Activated naive CD4-positive, alpha-beta T cell treated with anti-CD3 and anti-CD28 coated beads for 36 hours (primary cell): ENCODE measurements at regions of chrX and their contacts with region 1.

Region 1: GRCh38 chrX:1462596-1463251 is 10.0 kb upstream of the ASMTL start:
- DNase-seq: peak; percentile 91
- H3K4me3 Mint-ChIP-seq: peak overlapping the region; percentile 28
- H3K27ac Mint-ChIP-seq: peak overlapping the region; percentile 89
- H3K4me1 Mint-ChIP-seq: peaks cover 53% of the 10 kb centered on the region
- H3K27me3 Mint-ChIP-seq: no peaks in the 10 kb centered on the region

Region 2: GRCh38 chrX:1368385-1368698 is 94.4 kb before region 1 on chrX:
- CTCF ChIA-PET with region 1: no interaction called
- intact Hi-C with region 1: no loop called
- DNase-seq: no peak
- H3K4me3 Mint-ChIP-seq: no peak overlapping the region
- H3K27ac Mint-ChIP-seq: no peak overlapping the region
- H3K4me1 Mint-ChIP-seq: no peaks in the 10 kb centered on the region
- H3K27me3 Mint-ChIP-seq: no peaks in the 10 kb centered on the region

Region 3: DNA sequence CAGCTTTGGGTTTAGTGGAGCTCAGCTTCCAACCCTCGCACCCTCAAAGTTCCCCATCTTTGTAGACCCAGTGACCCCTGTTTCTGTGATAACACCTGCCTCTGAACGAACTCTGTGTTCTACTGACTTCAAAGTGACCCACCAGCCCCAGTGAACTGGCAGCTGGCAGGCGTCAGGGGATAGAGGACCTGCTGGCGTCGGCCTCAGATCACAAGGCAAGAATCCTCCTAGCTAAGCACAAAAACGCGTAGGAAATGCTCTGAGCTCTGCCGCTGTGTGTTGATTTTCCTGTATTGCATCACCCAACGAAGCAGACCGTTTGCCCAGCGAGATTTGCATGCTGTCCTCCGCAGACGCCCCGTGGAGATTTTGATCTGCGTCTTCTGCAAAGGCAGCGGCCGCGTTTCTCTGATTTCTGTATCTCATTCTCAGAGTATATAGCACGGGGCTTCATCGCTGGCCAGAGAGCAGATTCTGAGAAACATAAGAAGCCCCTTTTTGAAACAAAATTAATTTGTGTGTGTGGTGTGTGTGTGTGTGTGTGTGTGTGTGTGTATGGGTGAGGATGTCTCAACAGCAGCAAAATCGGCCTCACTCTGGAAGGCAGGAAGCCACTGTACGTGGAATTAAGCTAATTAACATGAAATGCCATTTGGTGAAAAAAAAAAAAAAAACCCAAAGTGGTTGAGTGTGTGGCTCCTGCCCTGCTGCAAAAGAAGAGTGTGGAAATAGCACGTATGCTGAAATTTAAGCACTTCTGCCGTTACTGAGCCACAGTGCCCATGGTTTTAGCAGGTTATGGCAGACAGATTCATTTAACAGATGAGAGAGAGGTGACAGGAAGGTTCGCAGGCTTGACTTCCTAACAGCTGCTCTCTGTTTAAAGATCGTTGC is 19.2 kb after region 1 on chrX:
- CTCF ChIA-PET with region 1: no interaction called
- intact Hi-C with region 1: loop called (anchors 1 kb)
- DNase-seq: peak; percentile 84
- H3K4me3 Mint-ChIP-seq: peak overlapping the region; percentile 88
- H3K27ac Mint-ChIP-seq: peak overlapping the region; percentile 100
- H3K4me1 Mint-ChIP-seq: peaks cover 66% of the 10 kb centered on the region
- H3K27me3 Mint-ChIP-seq: no peaks in the 10 kb centered on the region

Region 4: DNA sequence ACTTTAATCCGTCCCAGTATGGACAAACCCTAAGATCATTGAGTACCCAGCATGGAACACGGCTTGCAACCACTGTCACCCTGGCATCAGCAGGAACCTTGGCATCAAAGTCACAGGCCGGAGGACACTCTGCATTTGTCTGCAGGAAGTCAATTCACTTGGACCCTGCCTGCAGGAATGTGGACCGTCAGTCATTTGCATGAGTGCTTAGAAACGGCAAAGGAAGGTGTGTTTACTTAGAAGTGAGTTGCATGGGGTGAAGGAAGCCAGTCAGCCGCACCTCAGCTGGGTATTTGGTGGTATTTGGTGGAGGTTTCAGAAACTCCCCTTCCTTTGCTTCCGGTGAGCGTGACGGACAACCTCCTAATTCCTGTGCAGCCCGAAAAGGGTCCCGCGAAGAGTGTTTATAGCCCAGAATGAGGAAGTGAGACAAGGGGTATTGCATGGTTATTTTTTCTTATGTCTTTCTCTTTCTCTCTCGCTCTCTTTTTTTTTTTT is 58.8 kb after region 1 on chrX:
- CTCF ChIA-PET with region 1: no interaction called
- intact Hi-C with region 1: loop called (anchors 1 kb)
- DNase-seq: peak; percentile 85
- H3K4me3 Mint-ChIP-seq: peak overlapping the region; percentile 74
- H3K27ac Mint-ChIP-seq: peak overlapping the region; percentile 75
- H3K4me1 Mint-ChIP-seq: peaks cover 51% of the 10 kb centered on the region
- H3K27me3 Mint-ChIP-seq: no peaks in the 10 kb centered on the region

Region 5: GRCh38 chrX:1580735-1581531 is 118.2 kb after region 1 on chrX:
- CTCF ChIA-PET with region 1: no interaction called
- intact Hi-C with region 1: loop called (anchors 2 kb)
- DNase-seq: peak; percentile 92
- H3K4me3 Mint-ChIP-seq: no peak overlapping the region
- H3K27ac Mint-ChIP-seq: no peak overlapping the region
- H3K4me1 Mint-ChIP-seq: peaks cover 18% of the 10 kb centered on the region
- H3K27me3 Mint-ChIP-seq: no peaks in the 10 kb centered on the region

Region 6: DNA sequence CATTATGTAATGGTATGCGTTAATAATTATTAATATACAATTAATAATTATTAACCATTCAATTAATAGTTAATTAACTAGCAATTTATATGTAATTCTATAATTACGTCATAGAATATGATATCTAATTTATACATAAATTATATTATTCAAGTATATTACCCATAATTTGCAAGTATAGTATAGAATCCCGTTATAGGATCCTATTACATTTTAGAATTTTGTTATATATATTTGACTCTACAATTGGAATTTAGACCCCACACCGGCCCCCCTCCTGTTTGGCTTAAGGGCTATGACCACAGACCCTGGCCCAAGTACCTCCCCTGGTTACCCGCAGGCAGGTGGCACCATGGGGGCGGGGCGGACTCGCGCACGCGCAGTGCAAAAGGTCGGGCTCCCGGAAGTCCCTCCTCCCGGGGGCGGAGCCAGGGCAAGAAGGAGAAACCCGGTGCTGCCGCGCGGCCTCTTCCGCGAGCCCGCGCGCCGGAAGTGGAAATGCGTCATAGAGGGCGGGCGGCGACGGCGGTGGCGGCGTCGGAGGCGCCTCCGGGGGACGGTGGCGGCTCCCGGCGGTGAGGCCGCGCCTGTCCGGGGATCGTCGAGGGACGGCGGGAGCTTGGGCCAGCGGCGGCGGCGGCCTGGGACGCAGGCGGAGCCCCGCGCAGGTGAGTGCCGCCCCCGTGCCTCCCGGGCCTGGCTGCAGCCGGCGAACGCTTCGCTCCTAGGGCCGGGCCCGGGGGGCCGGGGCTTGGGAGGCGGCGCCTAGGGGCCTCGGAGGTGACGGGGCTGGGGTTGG is 128.6 kb after region 1 on chrX and contains the start of gene AKAP17A:
- CTCF ChIA-PET with region 1: no interaction called
- intact Hi-C with region 1: loop called (anchors 1 kb)
- DNase-seq: peak; percentile 98
- H3K4me3 Mint-ChIP-seq: peak within 1 kb of the TSS; percentile 91
- H3K27ac Mint-ChIP-seq: peak within 1 kb of the TSS; percentile 89
- H3K4me1 Mint-ChIP-seq: peaks cover 31% of the 10 kb centered on the region
- H3K27me3 Mint-ChIP-seq: no peaks in the 10 kb centered on the region
- total RNA-seq, gene AKAP17A: 59.2 to 60.5 TPM